Right cardiac atrium (tissue), 5 donors: ENCODE measurements at regions of chr1 and their contacts with region 1.

Region 1: DNA sequence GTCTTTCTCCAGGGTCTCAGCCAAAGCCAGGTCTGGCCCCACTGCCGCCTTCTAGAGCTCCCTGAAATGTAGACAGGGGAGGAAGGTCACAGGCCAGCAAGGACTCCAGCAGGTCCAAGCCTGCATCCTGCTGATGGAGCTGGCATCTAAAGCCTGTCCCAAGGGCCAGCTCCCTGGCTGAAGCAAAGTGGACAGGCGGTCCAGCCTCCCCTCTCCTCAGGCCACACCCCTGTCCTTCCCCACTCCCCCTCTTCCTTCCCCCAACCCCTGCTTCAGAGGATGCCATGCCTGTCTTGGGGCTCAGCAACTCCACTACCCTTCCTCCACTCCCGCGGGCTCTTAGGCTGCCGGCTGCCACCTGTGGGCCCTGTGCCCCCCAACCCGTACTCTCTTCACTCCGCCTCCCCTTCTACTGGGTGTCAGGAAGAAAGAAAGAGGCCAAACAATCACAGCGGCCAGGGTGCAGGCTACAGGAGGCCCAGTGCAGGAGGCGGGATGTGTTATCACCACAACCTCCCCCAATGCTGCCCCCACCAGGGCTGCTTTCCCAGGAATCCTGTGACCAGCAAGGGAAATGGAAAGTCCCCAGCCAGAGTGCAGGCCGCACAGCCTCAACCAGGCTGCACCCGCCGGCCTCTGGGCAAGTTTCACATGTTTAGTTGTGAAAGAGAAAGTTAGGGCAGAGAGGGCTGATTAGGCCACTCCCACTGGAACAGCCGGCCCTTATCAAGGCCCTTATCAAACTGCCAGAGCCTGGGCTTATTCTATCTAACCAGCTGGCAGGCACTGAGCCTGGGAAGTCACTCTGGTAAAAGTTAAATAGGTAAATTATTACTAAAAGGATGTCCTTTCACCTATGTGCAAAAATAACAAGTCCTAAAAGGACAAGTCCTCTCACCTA is 34.1 kb downstream of the ACOT7 start:
- DNase-seq: peak; percentile 71 to 90 (median 84)
- ATAC-seq: peak; percentile 76 to 85
- H3K4me3 ChIP-seq: no peak overlapping the region
- H3K27ac ChIP-seq: peak overlapping the region; percentile 24
- H3K4me1 ChIP-seq: peaks cover 2% of the 10 kb centered on the region
- H3K27me3 ChIP-seq: no peaks in the 10 kb centered on the region

Region 2: DNA sequence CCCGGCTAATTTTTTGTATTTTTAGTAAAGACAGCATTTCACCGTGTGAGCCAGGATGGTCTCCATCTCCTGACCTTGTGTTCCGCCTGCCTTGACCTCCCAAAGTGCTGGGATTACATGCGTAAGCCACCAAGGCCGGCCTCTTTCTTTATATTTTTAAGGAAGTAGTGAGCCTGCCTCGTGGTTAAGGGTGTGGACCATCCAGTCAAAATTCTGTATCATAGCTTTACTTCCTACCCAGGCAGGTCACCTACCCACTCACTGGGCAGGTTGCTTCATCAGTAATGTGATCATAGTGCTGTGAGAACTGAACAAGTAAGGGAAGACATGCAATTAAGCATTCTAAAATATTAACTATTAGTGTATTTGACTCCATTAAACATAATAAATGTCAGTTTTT is 42.2 kb after region 1 on chr1:
- intact Hi-C with region 1: loop called (anchors 5 to 10 kb)
- DNase-seq: no peak
- ATAC-seq: no peak
- H3K4me3 ChIP-seq: no peak overlapping the region
- H3K27ac ChIP-seq: no peak overlapping the region
- H3K4me1 ChIP-seq: no peaks in the 10 kb centered on the region
- H3K27me3 ChIP-seq: no peaks in the 10 kb centered on the region